IMR-90 (cell line): ENCODE measurements at regions of chr14 and their contacts with region 1.

Region 1: DNA sequence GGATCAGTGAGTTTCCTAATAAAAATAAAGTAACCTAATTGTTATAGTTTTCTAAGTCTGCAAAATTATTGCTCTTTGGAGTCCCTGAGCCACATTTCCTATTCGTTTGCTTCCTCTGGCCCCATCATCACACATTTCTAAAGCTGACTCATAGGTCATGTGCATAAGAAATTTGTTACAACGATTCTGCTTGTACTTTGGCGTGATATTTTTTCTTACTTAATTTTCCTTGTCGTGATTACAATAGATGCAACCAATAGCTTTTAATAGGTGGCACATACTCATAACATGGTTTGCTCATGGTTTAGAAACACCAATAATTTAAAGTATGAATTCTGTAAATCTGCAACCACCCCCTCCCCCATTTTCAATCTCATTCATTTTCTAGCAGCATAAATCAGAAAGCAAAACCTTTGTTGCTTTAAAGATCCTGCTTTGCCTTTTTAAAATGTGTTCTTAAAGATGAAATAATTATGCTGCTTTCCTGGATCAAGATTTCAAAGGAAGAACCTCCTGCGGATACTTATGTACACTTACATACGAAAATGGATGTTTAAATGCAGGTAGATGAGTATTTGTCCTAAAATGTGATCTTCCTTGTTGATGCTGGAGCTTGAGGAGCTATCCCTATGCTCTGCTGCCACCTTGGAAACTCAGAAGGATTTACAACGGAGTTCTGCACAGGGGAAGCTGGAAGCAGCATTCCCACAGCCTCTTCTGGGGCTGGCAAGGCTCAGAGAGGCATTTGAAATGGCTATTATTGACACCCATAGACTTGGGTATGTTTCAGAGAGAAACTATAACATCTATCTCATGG is 1.7 kb upstream of the FLRT2 start:
- DNase-seq: peak; percentile 90
- ATAC-seq: peak; percentile 28
- H3K4me3 ChIP-seq: peak overlapping the region; percentile 67
- H3K27ac ChIP-seq: peak overlapping the region; percentile 81; the same call in 1 of the 2 replicates
- H3K4me1 ChIP-seq: no peaks in the 10 kb centered on the region
- H3K27me3 ChIP-seq: no peaks in the 10 kb centered on the region
- CTCF ChIP-seq: peak; percentile 81
- POLR2A ChIP-seq: no peak
- RAD21 ChIP-seq: peak; percentile 95

Region 2: DNA sequence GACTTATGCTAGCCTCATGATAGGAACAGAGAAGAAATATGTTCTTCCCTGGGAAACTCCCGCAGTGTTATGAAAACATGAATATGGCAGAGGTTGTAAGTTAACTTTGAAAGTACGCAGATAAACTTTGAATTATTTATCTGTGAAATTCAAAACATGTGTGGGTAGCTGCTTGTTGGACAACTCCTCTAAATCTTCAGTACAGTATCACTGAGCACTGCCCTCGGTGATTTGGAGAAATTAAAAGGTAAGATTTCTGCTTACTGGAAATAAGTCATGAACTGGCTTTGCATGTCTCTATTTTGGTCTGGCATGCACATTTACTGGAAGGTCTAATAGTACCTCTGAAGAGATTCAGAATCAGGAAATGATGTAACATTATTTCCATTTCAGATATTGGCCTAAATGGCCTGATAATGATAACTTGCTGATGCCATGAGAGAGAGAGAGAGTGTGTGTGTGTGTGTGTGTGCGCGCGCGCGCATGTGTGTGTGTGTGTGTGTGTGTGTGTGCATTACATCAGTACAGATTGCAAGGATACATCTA is 1440.2 kb before region 1 on chr14:
- CTCF ChIA-PET with region 1: no interaction called
- POLR2A ChIA-PET with region 1: no interaction called
- dilution Hi-C with region 1: no loop called
- in situ Hi-C with region 1: no loop called
- intact Hi-C with region 1: loop called (anchors 10 kb)
- DNase-seq: peak; percentile 77
- ATAC-seq: peak; percentile 84
- H3K4me3 ChIP-seq: no peak overlapping the region
- H3K27ac ChIP-seq: peak overlapping the region; percentile 91; the same call in 1 of the 2 replicates
- H3K4me1 ChIP-seq: peaks cover 2% of the 10 kb centered on the region; the same call in 1 of the 2 replicates
- H3K27me3 ChIP-seq: no peaks in the 10 kb centered on the region
- CTCF ChIP-seq: no peak
- POLR2A ChIP-seq: no peak
- RAD21 ChIP-seq: no peak

Region 3: GRCh38 chr14:84657911-84658310 is 870.4 kb before region 1 on chr14:
- CTCF ChIA-PET with region 1: no interaction called
- POLR2A ChIA-PET with region 1: no interaction called
- dilution Hi-C with region 1: no loop called
- in situ Hi-C with region 1: no loop called
- intact Hi-C with region 1: loop called (anchors 10 kb)
- DNase-seq: no peak
- ATAC-seq: peak; percentile 40
- H3K4me3 ChIP-seq: no peak overlapping the region
- H3K27ac ChIP-seq: no peak overlapping the region
- H3K4me1 ChIP-seq: no peaks in the 10 kb centered on the region
- H3K27me3 ChIP-seq: no peaks in the 10 kb centered on the region
- CTCF ChIP-seq: no peak
- POLR2A ChIP-seq: no peak
- RAD21 ChIP-seq: no peak

Region 4: DNA sequence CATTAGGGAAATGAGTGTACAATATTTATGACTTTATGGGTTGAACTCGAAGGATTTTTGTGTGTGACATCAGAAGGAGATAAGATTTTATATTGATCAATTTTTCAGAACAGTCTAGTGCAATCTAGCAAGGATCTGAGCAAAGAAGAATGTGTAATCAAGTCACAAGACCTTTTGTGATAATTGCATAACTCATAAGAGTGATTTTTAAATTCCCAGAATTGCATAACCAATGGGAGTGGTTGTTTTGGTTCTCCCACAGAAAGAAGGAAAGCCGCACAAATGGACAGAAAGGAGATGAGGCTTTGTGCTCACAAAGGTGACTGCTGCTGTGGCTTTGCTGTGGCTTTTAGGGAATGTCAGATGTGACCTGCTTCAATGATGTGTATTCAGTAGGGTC is 440.1 kb before region 1 on chr14:
- CTCF ChIA-PET with region 1: no interaction called
- POLR2A ChIA-PET with region 1: no interaction called
- dilution Hi-C with region 1: no loop called
- in situ Hi-C with region 1: no loop called
- intact Hi-C with region 1: loop called (anchors 10 kb)
- DNase-seq: no peak
- ATAC-seq: no peak
- H3K4me3 ChIP-seq: no peak overlapping the region
- H3K27ac ChIP-seq: no peak overlapping the region
- H3K4me1 ChIP-seq: no peaks in the 10 kb centered on the region
- H3K27me3 ChIP-seq: no peaks in the 10 kb centered on the region
- CTCF ChIP-seq: no peak
- POLR2A ChIP-seq: no peak
- RAD21 ChIP-seq: no peak

Region 5: DNA sequence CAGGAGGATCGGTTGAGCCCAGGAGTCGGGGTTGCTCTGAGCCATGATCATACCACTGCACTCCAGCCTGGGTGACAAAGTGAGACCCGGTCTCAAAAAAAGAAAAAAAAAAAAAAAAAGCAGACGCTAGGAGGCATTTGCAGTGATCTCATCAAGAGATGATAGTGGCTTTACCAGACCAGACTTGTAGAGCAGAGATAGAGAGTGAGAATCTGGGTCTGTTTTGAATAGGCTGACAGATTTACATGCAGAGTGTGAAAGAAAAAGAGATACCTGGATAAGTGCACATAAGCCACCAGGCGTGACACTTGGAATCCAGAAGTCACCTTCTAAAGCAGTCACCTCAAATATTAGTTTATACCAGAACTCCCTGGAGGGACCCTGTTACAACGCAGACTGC is 19.4 kb before region 1 on chr14:
- CTCF ChIA-PET with region 1: interaction called, 3 read pairs
- POLR2A ChIA-PET with region 1: interaction called, 17 read pairs
- dilution Hi-C with region 1: no loop called
- in situ Hi-C with region 1: no loop called
- intact Hi-C with region 1: no loop called
- DNase-seq: no peak
- ATAC-seq: no peak
- H3K4me3 ChIP-seq: no peak overlapping the region
- H3K27ac ChIP-seq: no peak overlapping the region
- H3K4me1 ChIP-seq: no peaks in the 10 kb centered on the region
- H3K27me3 ChIP-seq: no peaks in the 10 kb centered on the region
- CTCF ChIP-seq: no peak
- POLR2A ChIP-seq: no peak
- RAD21 ChIP-seq: no peak